SK-N-SH (cell line): ENCODE measurements at regions of chr7 and their contacts with region 1.

Region 1: DNA sequence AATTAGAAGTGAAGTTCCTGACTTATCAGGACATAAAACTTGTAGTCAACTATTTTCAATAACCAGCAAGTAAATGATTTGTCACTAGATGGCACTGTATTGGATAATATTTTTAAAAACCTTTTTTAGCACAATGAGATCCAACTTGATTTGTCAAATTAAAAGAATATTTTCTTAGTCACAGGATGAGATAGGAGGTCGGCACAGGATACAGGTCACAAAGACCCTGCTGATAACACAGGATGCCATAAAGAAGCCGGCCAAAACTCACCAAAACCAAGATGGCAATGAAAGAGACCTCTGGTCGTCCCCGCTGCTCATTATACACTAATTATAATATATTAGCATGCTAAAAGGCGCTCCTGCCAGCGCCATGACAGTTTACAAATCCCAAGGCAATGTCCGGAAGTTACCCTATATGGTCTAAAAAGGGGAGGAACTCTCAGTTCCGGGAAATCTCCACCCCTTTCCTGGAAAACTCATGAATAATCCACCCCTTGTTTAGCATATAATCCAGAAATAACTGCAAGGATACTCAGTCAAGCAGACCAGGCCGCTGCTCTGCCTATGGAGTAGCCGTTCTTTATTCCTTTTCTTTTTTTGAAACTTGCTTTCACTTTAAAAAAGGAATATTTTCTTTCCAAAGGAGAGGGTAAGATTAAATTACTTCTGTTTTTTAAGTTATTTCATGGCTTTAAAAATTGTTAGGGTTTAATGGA is 255.7 kb upstream of the MKLN1 start:
- DNase-seq: peak; percentile 37
- H3K4me3 ChIP-seq: peak overlapping the region; percentile 37 to 38; a peak in 3 of 4 replicates
- H3K27ac ChIP-seq: peak overlapping the region; percentile 89 to 91
- H3K4me1 ChIP-seq: peaks cover 12 to 34% of the 10 kb centered on the region in 2 experiments
- H3K27me3 ChIP-seq: no peaks in the 10 kb centered on the region
- CTCF ChIP-seq: peak; percentile 87
- EP300 ChIP-seq: no peak
- RAD21 ChIP-seq: peak; percentile 45

Region 2: GRCh38 chr7:131057015-131057793 is 14.7 kb before region 1 on chr7:
- CTCF ChIA-PET with region 1: interaction called, 68 read pairs
- POLR2A ChIA-PET with region 1: no interaction called
- DNase-seq: no peak
- H3K4me3 ChIP-seq: no peak overlapping the region
- H3K27ac ChIP-seq: no peak overlapping the region
- H3K4me1 ChIP-seq: no peaks in the 10 kb centered on the region; a peak in 1 of 4 replicates
- H3K27me3 ChIP-seq: no peaks in the 10 kb centered on the region
- CTCF ChIP-seq: no peak
- EP300 ChIP-seq: no peak
- RAD21 ChIP-seq: no peak

Region 3: GRCh38 chr7:131103997-131104396 is 32.1 kb after region 1 on chr7:
- CTCF ChIA-PET with region 1: interaction called, 10 read pairs
- POLR2A ChIA-PET with region 1: no interaction called
- DNase-seq: no peak
- H3K4me3 ChIP-seq: no peak overlapping the region
- H3K27ac ChIP-seq: peak overlapping the region in 1 of 2 experiments; percentile 41; a peak in 1 of 4 replicates
- H3K4me1 ChIP-seq: peaks cover 7 to 16% of the 10 kb centered on the region in 2 experiments
- H3K27me3 ChIP-seq: no peaks in the 10 kb centered on the region
- CTCF ChIP-seq: no peak
- EP300 ChIP-seq: no peak
- RAD21 ChIP-seq: no peak

Region 4: GRCh38 chr7:131109757-131110293 is 37.9 kb after region 1 on chr7:
- CTCF ChIA-PET with region 1: interaction called, 10 read pairs
- POLR2A ChIA-PET with region 1: no interaction called
- DNase-seq: peak; percentile 86
- H3K4me3 ChIP-seq: peak overlapping the region; percentile 85 to 93
- H3K27ac ChIP-seq: peak overlapping the region; percentile 89 to 95
- H3K4me1 ChIP-seq: peaks cover 0 to 38% of the 10 kb centered on the region in 2 experiments; a peak in 3 of 4 replicates
- H3K27me3 ChIP-seq: no peaks in the 10 kb centered on the region
- CTCF ChIP-seq: no peak
- EP300 ChIP-seq: peak in 1 of 2 experiments; percentile 94; a peak in 2 of 4 replicates
- RAD21 ChIP-seq: no peak

Region 5: GRCh38 chr7:131424219-131424822 is 352.4 kb after region 1 on chr7:
- CTCF ChIA-PET with region 1: interaction called, 10 read pairs
- POLR2A ChIA-PET with region 1: no interaction called
- DNase-seq: peak; percentile 52
- H3K4me3 ChIP-seq: no peak overlapping the region
- H3K27ac ChIP-seq: no peak overlapping the region
- H3K4me1 ChIP-seq: no peaks in the 10 kb centered on the region; a peak in 1 of 4 replicates
- H3K27me3 ChIP-seq: no peaks in the 10 kb centered on the region
- CTCF ChIP-seq: peak; percentile 94
- EP300 ChIP-seq: no peak
- RAD21 ChIP-seq: peak; percentile 85